ENCODE measurements at regions of chr5 and their contacts with region 1.

Region 1: GRCh38 chr5:134145779-134146581 is 30.8 kb downstream of the SKP1 start:
- DNase-seq: peak; percentile 66 to 89 (median 80)
- ATAC-seq: peak; percentile 63 to 66
- H3K4me3 Mint-ChIP-seq: peak overlapping the region in 4 of 10 donors; percentile 12 to 69 (median 48)
- H3K27ac Mint-ChIP-seq: peak overlapping the region; percentile 77 to 96 (median 94)
- H3K4me1 Mint-ChIP-seq: peaks cover 34 to 70% (median 56%) of the 10 kb centered on the region in 4 donors
- H3K27me3 Mint-ChIP-seq: no peaks in the 10 kb centered on the region

Region 2: DNA sequence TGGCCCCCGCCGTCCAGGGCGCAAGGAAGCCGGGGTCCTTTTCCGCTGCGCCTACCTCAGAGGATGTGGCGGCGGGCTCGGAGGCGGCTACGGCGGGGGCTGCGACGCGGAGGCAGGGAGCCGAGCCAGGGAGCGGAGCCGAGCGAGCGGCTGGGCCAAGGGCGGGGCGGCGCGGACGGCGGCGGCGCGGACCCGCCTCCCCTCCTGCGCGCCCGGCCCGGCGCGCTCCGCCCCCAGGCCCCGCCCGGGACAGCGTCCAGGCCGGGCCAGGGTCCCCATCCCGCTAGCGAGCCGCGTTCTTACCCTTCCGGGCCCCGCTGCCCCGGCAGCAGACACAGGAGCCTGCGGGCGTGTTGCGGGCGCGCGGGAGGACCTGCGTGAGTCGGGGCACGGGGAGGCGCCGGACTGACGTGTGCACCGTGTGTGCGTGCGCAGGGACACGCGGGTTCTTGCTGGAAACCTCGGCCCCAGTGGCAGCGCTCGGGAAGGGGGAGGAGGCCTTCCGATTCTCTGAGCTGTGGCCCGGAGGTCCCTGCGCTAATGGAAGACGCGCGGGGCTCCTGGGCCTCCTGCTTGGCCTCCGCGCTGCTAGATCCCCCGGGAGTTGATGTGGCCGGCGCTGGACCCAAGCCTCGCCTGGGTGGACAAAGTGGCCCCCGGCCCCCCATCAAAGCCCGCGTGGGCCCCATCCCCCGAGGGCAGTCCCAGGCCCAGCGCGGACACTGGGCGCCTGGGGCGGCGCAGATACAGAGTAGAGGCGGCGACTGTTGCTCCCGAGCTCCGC is 141.2 kb before region 1 on chr5 and contains the start of gene VDAC1:
- POLR2A ChIA-PET with region 1: interaction called, 14 read pairs
- DNase-seq: peak; percentile 70 to 93 (median 88)
- ATAC-seq: peak; percentile 80 to 81
- H3K4me3 Mint-ChIP-seq: peak within 1 kb of the TSS; percentile 86 to 95 (median 92)
- H3K27ac Mint-ChIP-seq: peak within 1 kb of the TSS; percentile 90 to 98 (median 95)
- H3K4me1 Mint-ChIP-seq: peaks cover 21 to 52% (median 43%) of the 10 kb centered on the region in 4 donors
- H3K27me3 Mint-ChIP-seq: no peaks in the 10 kb centered on the region
- polyA plus RNA-seq, gene VDAC1: 64.4 to 72.9 (median 68.3) TPM

Region 3: DNA sequence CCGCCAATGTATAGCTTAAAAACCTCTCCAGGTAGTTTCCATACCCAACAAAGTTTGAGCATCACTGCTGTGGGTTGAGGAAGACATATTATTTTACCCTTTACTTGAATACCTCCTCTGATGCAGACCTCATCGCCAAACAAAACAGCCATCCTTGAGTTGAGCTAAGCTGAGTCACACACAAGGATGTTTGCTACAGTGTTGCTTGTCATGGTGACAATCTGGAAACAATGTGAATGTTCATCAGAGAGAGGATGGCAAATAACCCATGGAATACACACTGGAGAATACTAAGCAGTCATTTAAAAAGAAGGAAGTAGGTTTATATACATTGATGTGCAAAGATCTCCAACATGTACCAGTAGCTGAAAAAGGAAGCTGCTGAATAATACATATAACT is 72.6 kb before region 1 on chr5:
- POLR2A ChIA-PET with region 1: no interaction called
- DNase-seq: no peak
- ATAC-seq: no peak
- H3K4me3 Mint-ChIP-seq: peak overlapping the region in 2 of 10 donors; percentile 2 to 36
- H3K27ac Mint-ChIP-seq: peak overlapping the region in 4 of 10 donors; percentile 54 to 86 (median 70)
- H3K4me1 Mint-ChIP-seq: peaks cover 43 to 86% (median 80%) of the 10 kb centered on the region in 4 donors
- H3K27me3 Mint-ChIP-seq: peaks cover 0 to 3% (median 0%) of the 10 kb centered on the region in 5 donors

Region 4: DNA sequence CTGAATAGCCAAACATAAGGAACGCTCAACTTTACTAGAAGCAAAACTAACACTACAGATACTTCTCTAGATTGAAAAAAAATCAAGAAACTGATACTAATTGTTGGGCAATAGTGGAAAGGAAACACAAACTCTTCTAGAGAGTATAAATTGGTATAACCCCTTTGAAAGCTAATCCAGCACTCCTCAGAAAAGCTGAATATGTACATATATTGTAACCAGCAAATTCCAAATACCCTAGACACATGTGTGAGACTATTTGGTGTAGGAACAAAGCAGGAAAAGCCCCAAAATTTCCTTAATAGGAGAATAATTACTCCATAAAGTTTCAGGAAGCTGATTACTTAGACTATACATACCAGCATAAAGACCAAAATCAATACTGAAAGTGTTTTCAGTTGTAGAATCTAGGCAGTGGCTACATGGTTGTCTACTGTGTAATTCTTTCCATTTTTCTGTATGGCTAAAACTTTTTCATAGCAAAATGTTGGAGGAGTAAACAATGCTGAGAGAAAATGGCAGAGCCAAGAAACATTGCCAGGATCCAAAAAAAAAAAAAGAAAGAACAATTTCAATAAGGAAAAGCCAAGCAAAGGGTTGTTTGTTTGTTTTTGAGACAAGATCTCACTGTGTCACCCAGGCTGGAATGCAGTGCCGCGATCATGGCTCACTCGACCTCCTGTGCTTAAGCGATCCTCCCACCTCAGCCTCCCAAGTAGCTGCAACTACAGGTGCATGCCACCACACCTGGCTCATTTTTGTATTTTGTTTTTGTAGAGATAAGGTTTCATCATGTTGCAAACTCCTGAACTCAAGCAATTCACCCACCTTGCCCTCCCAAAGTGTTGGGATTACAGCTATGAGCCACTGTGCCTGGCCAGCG is 15.8 kb after region 1 on chr5:
- POLR2A ChIA-PET with region 1: interaction called, 48 read pairs
- DNase-seq: no peak
- ATAC-seq: no peak
- H3K4me3 Mint-ChIP-seq: no peak overlapping the region
- H3K27ac Mint-ChIP-seq: peak overlapping the region in 5 of 10 donors; percentile 1 to 37 (median 8)
- H3K4me1 Mint-ChIP-seq: peaks cover 18 to 54% (median 44%) of the 10 kb centered on the region in 4 donors
- H3K27me3 Mint-ChIP-seq: no peaks in the 10 kb centered on the region

Measured in naive thymus-derived CD8-positive, alpha-beta T cell (primary cell).